ENCODE measurements at regions of chr12 and their contacts with region 1.

Region 1: GRCh38 chr12:51246254-51246853 is 7.7 kb downstream of the DAZAP2 start:
- DNase-seq: no peak
- H3K4me3 ChIP-seq: no peak overlapping the region
- H3K27ac ChIP-seq: no peak overlapping the region
- H3K4me1 ChIP-seq: no peaks in the 10 kb centered on the region
- H3K27me3 ChIP-seq: no peaks in the 10 kb centered on the region
- CTCF ChIP-seq: no peak
- POLR2A ChIP-seq: no peak

Region 2: GRCh38 chr12:51210690-51211395 is 35.5 kb before region 1 on chr12:
- intact Hi-C with region 1: loop called (anchors 5 kb)
- DNase-seq: no peak
- H3K4me3 ChIP-seq: no peak overlapping the region
- H3K27ac ChIP-seq: no peak overlapping the region
- H3K4me1 ChIP-seq: no peaks in the 10 kb centered on the region
- H3K27me3 ChIP-seq: no peaks in the 10 kb centered on the region
- CTCF ChIP-seq: no peak
- POLR2A ChIP-seq: no peak